ENCODE measurements at regions of chr10 and their contacts with region 1.

Region 1: DNA sequence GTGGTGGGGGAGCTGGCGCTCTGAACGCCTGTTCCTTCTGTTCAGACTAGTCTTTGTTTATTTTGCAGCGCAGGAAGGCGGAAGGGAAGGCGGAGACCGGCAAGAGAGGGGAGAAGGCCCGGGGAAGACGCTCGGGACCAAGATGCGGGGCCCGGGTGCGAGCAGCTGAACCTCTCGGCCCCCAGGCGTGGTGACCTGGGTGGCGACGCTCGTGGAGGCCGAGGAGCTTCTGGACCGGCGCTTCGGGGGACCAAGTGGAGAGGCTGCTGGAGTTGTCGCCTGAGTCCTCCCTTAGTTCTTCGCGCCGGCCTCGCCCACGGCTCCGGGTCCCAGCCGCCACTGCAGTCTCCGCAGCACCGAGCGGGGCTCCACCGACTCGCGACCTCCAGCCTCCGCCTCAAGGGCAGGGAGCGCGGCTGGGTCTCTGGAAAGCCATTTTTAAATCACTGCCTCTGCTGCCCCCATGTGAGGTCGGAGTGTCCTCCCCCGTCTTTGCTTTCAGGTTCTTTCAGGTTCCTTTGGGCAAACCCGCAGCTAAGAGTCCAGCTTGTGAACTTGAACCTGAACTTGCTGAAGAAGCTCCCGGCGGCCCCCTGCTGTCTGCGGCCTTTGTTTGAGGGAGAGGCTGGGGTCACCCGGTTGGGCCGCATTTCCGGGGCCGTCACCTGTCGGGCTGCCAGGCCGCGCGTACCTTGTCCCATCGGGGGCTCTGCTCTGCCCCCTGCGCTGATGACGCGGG is 135.9 kb downstream of the KIF20B start:
- DNase-seq: peak; percentile 14 to 48 (median 34)
- ATAC-seq: peak; percentile 70
- H3K4me3 ChIP-seq: peak overlapping the region; percentile 57
- H3K4me3 Mint-ChIP-seq: peak overlapping the region; percentile 87 to 94 (median 91)
- H3K27ac ChIP-seq: peak overlapping the region; percentile 65
- H3K27ac Mint-ChIP-seq: peak overlapping the region; percentile 59 to 92 (median 85)
- H3K4me1 ChIP-seq: peaks cover 0 to 7% of the 10 kb centered on the region in 2 donors
- H3K4me1 Mint-ChIP-seq: peaks cover 0 to 30% (median 22%) of the 10 kb centered on the region in 7 donors
- H3K27me3 ChIP-seq: no peaks in the 10 kb centered on the region
- H3K27me3 Mint-ChIP-seq: peaks cover 0 to 36% (median 5%) of the 10 kb centered on the region in 5 donors

Region 2: DNA sequence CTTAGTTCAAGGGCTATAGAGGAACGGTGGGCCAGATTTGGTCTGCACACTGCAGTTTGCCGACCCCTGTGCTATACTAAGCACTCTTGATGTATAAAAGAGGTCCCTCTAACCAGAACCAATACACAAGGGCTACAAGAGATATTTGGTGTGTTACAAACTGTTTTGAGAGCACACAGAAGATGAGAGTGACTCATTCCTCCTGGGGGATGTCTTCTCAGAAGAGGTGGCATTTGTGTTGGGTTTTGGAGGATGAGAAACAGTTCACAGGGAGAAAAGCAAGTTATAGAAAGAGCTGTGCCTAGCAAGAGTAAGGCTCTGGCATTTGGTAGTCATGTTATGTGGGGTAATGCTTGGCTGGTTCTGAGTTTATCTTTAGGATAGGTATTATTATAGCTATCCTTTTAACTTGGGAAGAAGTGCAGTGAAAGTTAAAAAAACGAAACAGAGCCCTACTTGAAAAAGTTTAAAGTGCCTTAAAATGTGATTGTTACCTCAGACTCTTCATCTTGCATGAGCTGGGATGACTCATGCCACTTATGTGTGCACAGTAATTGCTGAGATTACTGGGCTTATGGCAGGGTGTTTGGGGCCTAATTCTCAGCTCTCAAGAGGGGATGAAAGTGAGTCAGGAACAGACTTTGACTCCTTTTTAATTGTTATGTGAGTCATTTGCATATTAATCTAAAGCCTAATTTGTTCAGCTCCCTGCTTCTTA is 24.4 kb after region 1 on chr10:
- CTCF ChIA-PET with region 1: no interaction called
- POLR2A ChIA-PET with region 1: interaction called, 4 read pairs
- intact Hi-C with region 1: loop called in 1 of 2 experiments (anchors 2 kb)
- DNase-seq: no peak
- ATAC-seq: no peak
- H3K4me3 ChIP-seq: no peak overlapping the region
- H3K4me3 Mint-ChIP-seq: peak overlapping the region in 6 of 10 donors; percentile 14 to 83 (median 74)
- H3K27ac ChIP-seq: no peak overlapping the region
- H3K27ac Mint-ChIP-seq: peak overlapping the region in 7 of 9 donors; percentile 6 to 86 (median 66)
- H3K4me1 ChIP-seq: peaks cover 0 to 12% of the 10 kb centered on the region in 2 donors
- H3K4me1 Mint-ChIP-seq: peaks cover 9 to 23% (median 16%) of the 10 kb centered on the region in 7 donors
- H3K27me3 ChIP-seq: no peaks in the 10 kb centered on the region
- H3K27me3 Mint-ChIP-seq: peaks cover 0 to 7% (median 0%) of the 10 kb centered on the region in 5 donors